HEK293 (cell line): ENCODE measurements at regions of chr17 and their contacts with region 1.

Region 1: DNA sequence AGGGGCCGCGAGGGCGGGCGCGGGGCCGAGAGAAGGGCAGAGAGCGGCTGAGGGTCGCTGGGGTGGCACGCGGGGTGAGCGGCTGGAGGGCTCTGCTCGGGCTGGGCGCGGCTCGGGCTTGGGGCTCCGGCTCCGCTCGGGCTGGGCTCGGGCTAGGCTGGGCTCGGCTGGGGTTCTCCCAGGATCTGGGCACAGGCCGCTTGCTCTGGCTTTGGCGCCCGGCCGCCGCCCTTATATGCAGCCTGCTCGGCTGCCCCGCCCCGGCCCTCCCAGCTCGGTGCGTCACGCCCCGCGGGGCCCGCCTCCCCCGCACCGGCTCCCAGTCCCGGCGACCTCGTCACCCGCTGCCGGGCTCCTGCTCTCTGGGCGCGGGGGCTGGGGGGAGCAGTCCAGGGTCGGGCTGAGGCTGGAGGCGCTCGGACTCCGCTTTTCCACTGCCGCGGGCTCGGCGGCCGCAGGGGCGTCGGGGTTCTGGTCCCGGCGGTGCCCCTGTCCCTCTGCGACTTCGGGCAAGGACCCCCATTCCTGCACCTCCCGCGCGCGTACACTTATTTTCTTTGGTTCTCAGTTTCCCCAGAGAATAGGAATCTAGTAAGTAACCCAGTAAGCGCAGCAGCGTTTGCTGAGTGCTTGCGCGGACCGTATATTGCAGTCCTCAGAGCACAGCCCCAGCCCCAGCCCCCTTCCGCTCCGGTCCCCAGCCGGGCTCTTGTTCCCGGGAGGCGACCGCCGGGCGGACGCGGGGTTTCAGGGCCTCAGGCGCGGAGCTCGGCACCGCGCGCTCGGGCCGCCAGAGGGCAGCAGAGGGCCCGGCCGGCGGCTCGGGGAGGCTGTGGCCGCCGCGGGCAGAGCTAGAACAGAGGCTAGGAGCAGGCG is at the start of gene RASD1:
- H3K4me3 ChIP-seq: peak within 1 kb of the TSS; percentile 64
- H3K27ac ChIP-seq: peak within 1 kb of the TSS; percentile 64
- H3K4me1 ChIP-seq: no peaks in the 10 kb centered on the region
- CTCF ChIP-seq: 0 out of 2 replicates have a peak, but pooled peaks have one; percentile 25

Region 2: DNA sequence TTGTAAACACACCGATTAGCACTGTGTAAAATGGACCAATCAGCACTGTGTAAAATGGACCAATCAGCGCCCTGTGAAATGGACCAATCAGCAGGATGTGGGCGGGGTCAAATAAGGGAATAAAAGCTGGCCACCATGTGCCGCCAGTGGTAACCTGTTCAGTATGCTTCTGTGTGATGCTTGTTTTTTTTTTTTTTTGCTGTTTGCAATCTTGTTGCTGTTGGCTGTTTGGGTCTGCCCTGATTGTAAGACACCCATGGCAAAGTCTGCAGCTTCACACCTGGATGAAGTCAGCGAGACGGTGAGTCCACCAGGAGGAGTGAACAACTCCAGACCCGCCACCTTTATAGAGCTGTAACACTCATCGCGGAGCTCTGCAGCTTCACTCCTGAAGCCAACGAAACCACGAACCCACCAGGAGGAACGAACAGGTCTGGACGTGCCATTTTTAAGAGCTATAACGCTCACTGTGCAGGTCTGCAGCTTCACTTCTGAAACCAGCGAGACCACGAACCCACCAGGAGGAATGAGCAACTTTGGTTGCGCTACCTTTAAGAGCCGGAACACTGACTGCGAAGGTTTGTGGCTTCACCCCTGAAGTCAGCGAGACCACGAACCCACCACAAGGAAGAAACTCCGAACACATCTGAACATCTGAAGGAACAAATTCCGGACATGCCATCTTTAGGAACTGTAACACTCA is 104.6 kb before region 1 on chr17:
- CTCF ChIA-PET with region 1: interaction called, 8 read pairs
- POLR2A ChIA-PET with region 1: interaction called, 10 read pairs
- H3K4me3 ChIP-seq: no peak overlapping the region
- H3K27ac ChIP-seq: no peak overlapping the region
- H3K4me1 ChIP-seq: no peaks in the 10 kb centered on the region
- CTCF ChIP-seq: no peak

Region 3: GRCh38 chr17:17467720-17468119 is 28.7 kb before region 1 on chr17:
- CTCF ChIA-PET with region 1: interaction called, 9 read pairs
- POLR2A ChIA-PET with region 1: interaction called, 13 read pairs
- H3K4me3 ChIP-seq: no peak overlapping the region
- H3K27ac ChIP-seq: 0 out of 2 replicates have a peak overlapping the region, but pooled peaks have one; percentile 2
- H3K4me1 ChIP-seq: 0 out of 2 replicates have a peak, but pooled peaks cover 2% of the 10 kb centered on the region
- CTCF ChIP-seq: no peak

Region 4: GRCh38 chr17:17517795-17518413 is 21.5 kb after region 1 on chr17:
- CTCF ChIA-PET with region 1: interaction called, 19 read pairs
- POLR2A ChIA-PET with region 1: interaction called, 13 read pairs
- H3K4me3 ChIP-seq: no peak overlapping the region
- H3K27ac ChIP-seq: no peak overlapping the region
- H3K4me1 ChIP-seq: no peaks in the 10 kb centered on the region; the same call in 1 of the 2 replicates
- CTCF ChIP-seq: no peak

Region 5: GRCh38 chr17:17568749-17569195 is 72.3 kb after region 1 on chr17:
- CTCF ChIA-PET with region 1: interaction called, 86 read pairs
- POLR2A ChIA-PET with region 1: interaction called, 15 read pairs
- H3K4me3 ChIP-seq: no peak overlapping the region
- H3K27ac ChIP-seq: no peak overlapping the region
- H3K4me1 ChIP-seq: no peaks in the 10 kb centered on the region
- CTCF ChIP-seq: peak; percentile 81

Region 6: GRCh38 chr17:17613708-17614114 is 117.3 kb after region 1 on chr17:
- CTCF ChIA-PET with region 1: interaction called, 11 read pairs
- POLR2A ChIA-PET with region 1: interaction called, 11 read pairs
- H3K4me3 ChIP-seq: no peak overlapping the region
- H3K27ac ChIP-seq: no peak overlapping the region
- H3K4me1 ChIP-seq: no peaks in the 10 kb centered on the region
- CTCF ChIP-seq: peak; percentile 57